ENCODE measurements at regions of chr10 and their contacts with region 1.

Region 1: DNA sequence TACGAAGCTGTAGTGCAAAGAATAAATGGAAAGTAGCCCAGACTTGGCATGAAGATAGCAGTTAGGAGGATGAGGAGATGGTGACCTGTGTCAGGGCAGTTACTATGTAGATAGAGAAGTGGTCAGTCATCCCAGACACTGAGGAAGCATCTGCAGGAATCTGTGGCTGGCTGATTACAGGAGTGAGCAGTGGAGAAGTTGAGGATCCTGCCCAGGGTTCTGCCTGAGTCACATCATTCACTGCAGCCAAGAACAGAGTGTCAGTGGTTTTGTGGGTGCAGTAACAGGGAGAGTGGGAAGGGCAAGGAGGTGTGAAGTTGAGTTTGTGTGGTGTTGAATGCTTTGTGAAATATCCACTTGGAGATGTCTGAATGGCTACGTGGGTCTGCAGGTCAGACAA is 676.4 kb upstream of the NRP1 start:
- DNase-seq: peak; percentile 49
- H3K4me3 ChIP-seq: no peak overlapping the region
- H3K27ac ChIP-seq: no peak overlapping the region
- H3K4me1 ChIP-seq: no peaks in the 10 kb centered on the region
- H3K27me3 ChIP-seq: no peaks in the 10 kb centered on the region
- CTCF ChIP-seq: no peak

Region 2: DNA sequence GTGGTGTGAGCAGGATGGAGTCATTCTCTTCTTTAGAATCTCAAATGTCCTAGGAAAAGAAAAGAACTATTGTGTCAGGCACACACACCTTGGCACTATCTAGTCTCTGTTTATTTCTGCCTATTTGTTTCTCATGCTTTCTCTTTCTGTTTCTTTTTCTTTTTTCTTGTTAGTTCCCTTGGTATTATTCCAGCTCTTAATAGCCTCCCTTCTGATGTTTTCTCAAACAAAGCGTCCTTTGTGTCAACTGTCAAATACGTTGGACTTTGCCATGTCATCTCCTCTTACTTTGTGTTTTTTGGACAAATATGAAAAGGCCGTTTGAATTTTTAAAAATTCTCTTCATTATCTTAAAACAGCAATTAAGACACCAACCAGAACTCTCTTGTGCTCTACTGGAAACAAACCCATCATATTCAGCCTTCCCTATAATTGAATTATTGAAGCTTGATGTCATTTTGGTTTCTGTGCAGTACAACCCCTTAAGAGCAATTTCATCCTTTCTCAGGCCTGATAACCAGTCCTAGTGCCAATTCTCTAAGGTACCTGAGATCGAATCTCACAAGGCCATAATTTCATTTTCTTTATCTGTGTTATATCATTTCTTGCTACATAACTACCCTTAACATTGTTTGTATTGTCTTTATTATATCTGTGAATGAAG is 178.6 kb before region 1 on chr10:
- CTCF ChIA-PET with region 1: no interaction called
- dilution Hi-C with region 1: no loop called
- in situ Hi-C with region 1: no loop called
- intact Hi-C with region 1: no loop called
- DNase-seq: no peak
- H3K4me3 ChIP-seq: no peak overlapping the region
- H3K27ac ChIP-seq: no peak overlapping the region
- H3K4me1 ChIP-seq: no peaks in the 10 kb centered on the region
- H3K27me3 ChIP-seq: no peaks in the 10 kb centered on the region
- CTCF ChIP-seq: no peak

Region 3: DNA sequence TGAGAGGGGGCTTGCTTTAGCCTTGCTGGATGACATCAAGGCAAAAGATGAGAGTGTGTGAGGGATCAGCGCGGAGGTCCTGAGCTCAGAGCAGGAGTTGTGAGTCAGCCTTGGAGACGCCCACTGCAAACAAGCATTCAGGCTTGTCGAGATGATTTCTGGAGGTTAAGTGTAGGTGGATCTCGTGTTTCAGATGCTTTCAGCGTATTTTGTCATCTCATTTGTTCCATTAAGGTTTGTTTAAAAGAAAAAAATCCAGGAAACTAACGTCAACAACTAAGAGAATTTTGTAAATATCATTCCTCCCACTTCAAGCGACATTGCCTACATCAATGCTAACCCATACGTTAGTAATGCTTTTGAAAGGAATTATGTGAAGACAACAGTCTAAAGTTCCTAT is 39.0 kb after region 1 on chr10:
- CTCF ChIA-PET with region 1: no interaction called
- dilution Hi-C with region 1: no loop called
- in situ Hi-C with region 1: no loop called
- intact Hi-C with region 1: no loop called
- DNase-seq: peak; percentile 32
- H3K4me3 ChIP-seq: no peak overlapping the region
- H3K27ac ChIP-seq: no peak overlapping the region
- H3K4me1 ChIP-seq: peaks cover 11% of the 10 kb centered on the region
- H3K27me3 ChIP-seq: no peaks in the 10 kb centered on the region
- CTCF ChIP-seq: no peak

Region 4: GRCh38 chr10:34078745-34079470 is 68.0 kb after region 1 on chr10:
- CTCF ChIA-PET with region 1: no interaction called
- dilution Hi-C with region 1: loop called (anchors 5 kb)
- in situ Hi-C with region 1: no loop called
- intact Hi-C with region 1: no loop called
- DNase-seq: peak; percentile 27
- H3K4me3 ChIP-seq: no peak overlapping the region
- H3K27ac ChIP-seq: no peak overlapping the region
- H3K4me1 ChIP-seq: peaks cover 8% of the 10 kb centered on the region
- H3K27me3 ChIP-seq: no peaks in the 10 kb centered on the region
- CTCF ChIP-seq: no peak

Region 5: DNA sequence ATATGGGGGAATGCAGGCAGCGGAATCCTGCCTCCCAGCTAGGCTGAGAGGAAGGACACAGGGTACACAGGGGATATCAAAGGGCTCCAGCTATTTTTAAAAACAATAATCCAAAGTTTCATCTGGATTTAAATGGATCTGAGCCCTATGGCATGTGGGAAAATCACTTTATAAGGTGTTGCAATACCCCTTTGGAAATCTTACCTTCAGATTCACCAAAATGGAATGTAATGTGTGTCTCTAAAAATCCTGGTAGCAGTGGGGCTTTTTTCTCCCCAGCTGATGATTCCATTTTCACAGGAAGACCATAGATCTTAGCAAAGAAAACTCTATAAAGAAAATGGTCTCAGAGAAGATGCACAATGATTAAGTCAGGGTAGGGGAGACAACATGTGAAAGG is 82.0 kb after region 1 on chr10:
- CTCF ChIA-PET with region 1: no interaction called
- dilution Hi-C with region 1: no loop called
- in situ Hi-C with region 1: no loop called
- intact Hi-C with region 1: no loop called
- DNase-seq: peak; percentile 24
- H3K4me3 ChIP-seq: no peak overlapping the region
- H3K27ac ChIP-seq: no peak overlapping the region
- H3K4me1 ChIP-seq: no peaks in the 10 kb centered on the region
- H3K27me3 ChIP-seq: no peaks in the 10 kb centered on the region
- CTCF ChIP-seq: no peak

Measured in mammary epithelial cell (primary cell).